Activated T-helper 1 cell treated with anti-CD3 and anti-CD28 coated beads, Interleukin-12 subunit alpha, Interleukin-12 subunit beta, Interleukin-2, Interleukin-4 antibody, amounts not matched to agents 30 ng/mL and 10 ng/mL and 1 ng/mL, durations not matched to agents 14 hours and 24 hours and 36 hours (primary cell): ENCODE measurements at regions of chr11 and their contacts with region 1.

Region 1: DNA sequence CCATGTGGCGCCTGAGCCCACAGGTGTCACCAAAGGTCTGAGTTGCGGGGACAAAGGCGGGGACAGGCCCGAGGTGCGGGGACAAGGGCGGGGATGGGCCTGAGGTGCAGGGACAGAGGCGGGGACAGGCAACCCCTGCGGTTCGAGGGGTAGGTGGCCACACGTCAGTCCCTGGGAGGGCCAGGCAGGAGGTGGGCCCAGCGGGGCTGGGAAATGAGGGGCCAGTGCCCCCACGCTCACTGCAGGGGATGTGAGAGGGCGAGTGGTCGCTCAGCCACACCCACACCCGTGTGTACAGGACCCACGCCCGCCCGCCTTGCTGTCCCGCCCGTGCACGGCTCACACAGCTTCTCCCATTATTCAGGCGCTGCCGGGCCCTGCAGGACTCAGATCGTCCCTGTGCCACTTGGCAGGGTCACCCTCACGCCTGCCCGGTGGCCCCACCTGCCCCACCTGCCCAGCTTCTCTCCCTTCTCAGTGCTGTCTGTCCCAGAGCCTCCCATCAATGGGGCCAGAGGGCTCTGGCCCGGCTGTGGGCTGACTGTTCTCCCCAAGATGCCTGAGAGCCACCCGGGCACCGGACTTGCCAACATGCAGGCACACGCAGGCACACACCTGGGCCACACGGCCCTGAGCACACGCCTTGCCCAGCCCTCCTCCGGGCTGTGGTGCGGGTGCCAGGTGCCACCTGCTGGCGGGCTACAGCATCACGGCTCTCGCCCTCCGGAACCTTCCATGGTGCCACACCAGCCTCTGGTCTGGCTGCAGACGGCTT is 14.2 kb upstream of the MUC6 start:
- DNase-seq: peak; percentile 63
- H3K4me3 Mint-ChIP-seq: no peak overlapping the region
- H3K27ac Mint-ChIP-seq: no peak overlapping the region
- H3K4me1 Mint-ChIP-seq: no peaks in the 10 kb centered on the region
- H3K27me3 Mint-ChIP-seq: peaks cover 8% of the 10 kb centered on the region

Region 2: DNA sequence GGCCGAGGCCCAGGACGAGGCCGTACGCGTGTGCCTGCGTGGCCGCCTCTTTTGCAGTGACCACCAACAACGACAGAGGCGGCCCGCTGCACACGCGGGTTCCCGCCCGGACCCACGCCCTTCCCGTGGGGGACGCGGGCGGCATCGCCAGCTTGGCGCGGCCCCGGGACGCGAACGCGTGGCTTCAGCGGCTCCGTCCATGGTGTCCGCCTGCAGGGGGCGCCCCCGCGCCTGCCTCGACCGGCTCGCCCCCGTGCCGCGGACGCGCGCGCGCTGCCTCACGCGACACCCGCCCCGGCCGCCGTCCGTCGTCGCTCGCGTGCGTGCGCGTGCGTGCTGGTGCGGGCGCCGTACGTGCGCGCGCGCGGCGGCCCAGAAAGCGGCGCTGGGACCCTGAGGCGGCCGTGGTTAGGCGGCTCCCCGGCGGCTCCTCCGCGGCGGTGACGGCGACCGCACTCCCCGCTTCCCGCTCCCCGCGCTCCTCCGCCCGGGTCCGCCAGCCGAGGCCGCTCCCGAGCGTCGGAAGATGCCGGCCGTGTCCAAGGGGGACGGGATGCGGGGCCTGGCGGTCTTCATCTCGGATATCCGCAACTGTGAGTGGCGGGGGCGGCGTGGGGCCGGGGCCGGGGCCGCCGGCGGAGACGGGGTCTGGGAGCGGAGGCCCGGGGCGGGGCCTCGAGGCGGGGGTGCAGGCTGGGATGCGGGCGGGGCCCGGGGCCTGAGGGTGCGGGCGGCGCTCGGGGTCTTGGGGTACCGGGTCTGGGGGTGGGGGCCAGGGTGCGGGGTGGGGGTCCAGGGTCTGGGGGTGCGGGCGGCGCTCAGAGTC is 125.1 kb before region 1 on chr11 and contains the start of gene AP2A2:
- intact Hi-C with region 1: loop called (anchors 1 kb)
- DNase-seq: peak; percentile 90
- H3K4me3 Mint-ChIP-seq: peak within 1 kb of the TSS; percentile 85
- H3K27ac Mint-ChIP-seq: peak within 1 kb of the TSS; percentile 71
- H3K4me1 Mint-ChIP-seq: peaks cover 28% of the 10 kb centered on the region
- H3K27me3 Mint-ChIP-seq: no peaks in the 10 kb centered on the region
- total RNA-seq, gene AP2A2: 49.7 and 60.4 TPM in 2 replicates

Region 3: GRCh38 chr11:1153951-1154493 is 103.3 kb after region 1 on chr11:
- intact Hi-C with region 1: no loop called
- DNase-seq: no peak
- H3K4me3 Mint-ChIP-seq: no peak overlapping the region
- H3K27ac Mint-ChIP-seq: no peak overlapping the region
- H3K4me1 Mint-ChIP-seq: no peaks in the 10 kb centered on the region
- H3K27me3 Mint-ChIP-seq: no peaks in the 10 kb centered on the region